Sciatic nerve (tissue), 2 donors: ENCODE measurements at regions of chr11 and their contacts with region 1.

Region 1: DNA sequence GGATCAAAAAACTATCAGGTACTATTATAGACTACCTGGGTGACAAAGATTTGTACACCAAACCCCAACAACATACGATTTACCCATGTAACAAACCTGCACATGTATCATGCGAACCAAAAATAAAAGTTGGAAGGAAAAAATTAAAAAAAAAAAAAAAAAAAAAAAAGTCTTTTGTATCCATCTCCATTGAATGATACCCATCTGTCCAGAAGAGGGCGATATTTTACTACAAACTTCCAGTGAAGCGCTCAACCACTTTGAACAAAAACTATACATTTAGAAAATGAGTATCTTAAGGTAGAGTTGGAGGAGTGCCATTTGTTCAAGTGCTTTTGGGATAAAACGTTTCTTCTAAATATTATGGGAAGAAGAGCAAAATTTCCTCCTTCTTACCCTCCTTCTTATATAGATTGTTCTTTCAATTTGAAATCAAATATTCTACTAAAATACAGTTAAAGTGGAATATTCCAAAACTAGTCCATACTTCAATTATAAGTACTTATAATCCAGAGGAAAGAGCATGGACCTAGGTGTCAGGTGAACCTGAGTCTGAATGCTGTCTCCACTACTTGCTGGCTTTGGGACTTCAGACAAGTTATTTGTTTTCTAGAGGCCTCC is 23.3 kb downstream of the ARL14EP start:
- DNase-seq: no peak
- ATAC-seq: peak; percentile 41

Region 2: DNA sequence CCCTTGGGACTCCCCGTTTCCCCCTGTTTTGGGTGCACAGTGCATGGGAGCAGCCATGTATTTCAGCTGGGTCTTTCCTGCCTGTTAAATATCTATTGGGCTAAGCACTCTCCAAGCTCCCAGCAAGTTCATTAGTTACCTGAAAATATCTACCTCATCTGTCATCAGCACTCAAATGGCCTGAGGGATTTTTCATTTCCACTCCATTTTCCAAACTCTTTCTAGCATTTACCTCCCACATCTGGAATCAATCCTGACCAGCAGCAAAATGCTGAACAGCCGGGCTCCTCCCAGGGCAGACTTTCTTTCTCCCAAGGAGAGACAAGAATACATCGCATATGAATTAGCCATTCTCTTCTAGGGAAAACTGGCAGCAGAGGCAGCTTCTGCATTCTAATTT is 513.5 kb after region 1 on chr11:
- intact Hi-C with region 1: loop called (anchors 5 kb)
- DNase-seq: no peak
- ATAC-seq: no peak

Region 3: GRCh38 chr11:30917859-30918478 is 571.8 kb after region 1 on chr11:
- intact Hi-C with region 1: loop called (anchors 5 kb)
- DNase-seq: no peak
- ATAC-seq: peak; percentile 68